ENCODE measurements at regions of chr12 and their contacts with region 1.

Region 1: GRCh38 chr12:69157023-69157655 is 82.2 kb upstream of the CPSF6 start:
- DNase-seq: peak; percentile 85
- CTCF ChIP-seq: peak; percentile 97

Region 2: GRCh38 chr12:69179786-69180185 is 22.6 kb after region 1 on chr12:
- CTCF ChIA-PET with region 1: interaction called, 21 read pairs
- POLR2A ChIA-PET with region 1: no interaction called
- DNase-seq: no peak
- CTCF ChIP-seq: no peak

Region 3: GRCh38 chr12:69254046-69254445 is 96.9 kb after region 1 on chr12:
- CTCF ChIA-PET with region 1: interaction called, 99 read pairs
- POLR2A ChIA-PET with region 1: interaction called, 5 read pairs
- DNase-seq: peak; percentile 49
- CTCF ChIP-seq: peak; percentile 63

Region 4: GRCh38 chr12:69290545-69291277 is 133.6 kb after region 1 on chr12:
- CTCF ChIA-PET with region 1: no interaction called
- POLR2A ChIA-PET with region 1: no interaction called
- DNase-seq: peak; percentile 73
- CTCF ChIP-seq: peak; percentile 97

Region 5: GRCh38 chr12:69359531-69360347 is 202.6 kb after region 1 on chr12 and contains the start of gene YEATS4:
- CTCF ChIA-PET with region 1: interaction called, 10 read pairs
- POLR2A ChIA-PET with region 1: no interaction called
- DNase-seq: peak; percentile 93
- CTCF ChIP-seq: no peak